Activated T-helper 1 cell treated with anti-CD3 and anti-CD28 coated beads, Interleukin-12 subunit alpha, Interleukin-12 subunit beta, Interleukin-2, Interleukin-4 antibody, amounts not matched to agents 30 ng/mL and 10 ng/mL and 1 ng/mL, durations not matched to agents 14 hours and 24 hours and 36 hours (primary cell): ENCODE measurements at regions of chr6 and their contacts with region 1.

Region 1: GRCh38 chr6:145836170-145836569 is 21.6 kb upstream of the FBXO30 start:
- DNase-seq: no peak
- H3K4me3 Mint-ChIP-seq: no peak overlapping the region
- H3K27ac Mint-ChIP-seq: no peak overlapping the region
- H3K4me1 Mint-ChIP-seq: peaks cover 5% of the 10 kb centered on the region
- H3K27me3 Mint-ChIP-seq: no peaks in the 10 kb centered on the region

Region 2: DNA sequence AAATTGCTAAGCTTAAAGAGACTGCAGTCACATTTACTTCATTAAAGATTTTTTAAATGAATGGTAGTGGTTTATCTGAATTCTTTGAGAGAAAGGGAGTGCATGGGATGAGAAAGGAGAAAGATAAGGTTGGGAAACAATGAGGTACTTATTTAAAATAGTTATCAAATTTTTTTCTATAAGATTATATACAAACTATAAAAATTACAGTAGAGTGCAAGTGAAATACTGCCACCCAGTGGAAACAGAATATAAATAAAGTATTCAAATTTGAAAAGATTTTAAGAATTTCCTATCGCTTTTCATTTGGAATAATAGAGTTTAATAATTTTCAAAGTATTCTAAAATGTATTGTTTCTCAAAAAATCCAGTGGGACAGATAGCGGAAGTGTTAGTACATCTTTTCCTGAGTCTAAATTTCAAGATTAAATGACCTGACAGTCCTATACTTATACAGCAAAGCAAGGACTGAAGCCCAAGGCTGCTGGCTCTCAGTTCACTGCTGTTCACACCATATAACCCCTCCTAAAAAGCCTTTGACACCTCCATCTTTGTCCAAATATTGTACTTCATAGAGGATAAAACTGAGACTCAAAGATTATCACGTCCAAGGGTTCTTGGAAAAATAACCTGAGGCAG is 131.9 kb before region 1 on chr6:
- intact Hi-C with region 1: no loop called
- DNase-seq: no peak
- H3K4me3 Mint-ChIP-seq: no peak overlapping the region
- H3K27ac Mint-ChIP-seq: no peak overlapping the region
- H3K4me1 Mint-ChIP-seq: peaks cover 7% of the 10 kb centered on the region
- H3K27me3 Mint-ChIP-seq: no peaks in the 10 kb centered on the region

Region 3: DNA sequence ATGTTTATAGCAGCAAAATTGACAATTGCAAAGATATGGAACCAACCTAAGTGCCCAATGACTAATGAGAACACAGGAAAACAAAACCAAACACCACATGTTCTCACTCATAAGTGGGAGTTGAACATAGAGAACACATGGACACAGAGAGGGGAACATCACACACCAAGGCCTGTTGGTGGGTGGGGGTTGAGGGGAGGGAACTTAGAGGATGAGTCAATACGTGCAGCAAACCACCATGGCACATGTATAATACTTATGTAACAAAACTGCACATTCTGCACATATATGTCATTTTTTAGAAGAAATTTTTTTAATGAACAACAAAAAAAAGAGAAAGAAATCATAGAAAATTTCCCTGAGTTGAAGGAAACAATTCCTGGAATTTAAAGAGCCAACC is 104.7 kb before region 1 on chr6:
- intact Hi-C with region 1: no loop called
- DNase-seq: no peak
- H3K4me3 Mint-ChIP-seq: no peak overlapping the region
- H3K27ac Mint-ChIP-seq: no peak overlapping the region
- H3K4me1 Mint-ChIP-seq: peaks cover 21% of the 10 kb centered on the region
- H3K27me3 Mint-ChIP-seq: no peaks in the 10 kb centered on the region

Region 4: GRCh38 chr6:145823328-145823944 is 12.7 kb before region 1 on chr6:
- intact Hi-C with region 1: loop called (anchors 1 kb)
- DNase-seq: no peak
- H3K4me3 Mint-ChIP-seq: no peak overlapping the region
- H3K27ac Mint-ChIP-seq: peak overlapping the region; percentile 59
- H3K4me1 Mint-ChIP-seq: peaks cover 46% of the 10 kb centered on the region
- H3K27me3 Mint-ChIP-seq: no peaks in the 10 kb centered on the region

Region 5: DNA sequence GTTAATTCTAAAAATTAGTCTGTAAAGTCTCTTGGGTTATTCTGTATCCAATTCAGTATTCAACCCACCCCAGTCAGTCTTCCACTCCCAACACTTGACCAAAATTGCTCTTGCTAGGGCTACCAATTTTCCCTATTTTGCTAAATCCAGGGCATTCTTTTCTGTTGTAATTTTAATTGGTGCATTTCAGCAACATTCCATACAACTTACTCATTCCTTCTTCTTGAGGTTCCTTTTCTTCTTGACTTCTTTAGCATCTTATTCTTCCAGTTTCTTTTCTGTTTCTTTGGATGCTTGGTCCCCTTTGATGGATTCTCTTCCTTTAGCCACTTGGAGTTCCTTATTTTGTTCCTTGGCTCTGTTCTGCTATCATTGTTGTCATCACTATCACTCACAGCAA is 181.5 kb after region 1 on chr6:
- intact Hi-C with region 1: no loop called
- DNase-seq: no peak
- H3K4me3 Mint-ChIP-seq: no peak overlapping the region
- H3K27ac Mint-ChIP-seq: no peak overlapping the region
- H3K4me1 Mint-ChIP-seq: no peaks in the 10 kb centered on the region
- H3K27me3 Mint-ChIP-seq: no peaks in the 10 kb centered on the region